Activated CD8-positive, alpha-beta memory T cell treated with anti-CD3 and anti-CD28 coated beads, Interleukin-2, amount 10 ng/mL, durations not matched to agents 7 days and 5 days (primary cell): ENCODE measurements at regions of chr3 and their contacts with region 1.

Region 1: GRCh38 chr3:111311709-111312235 is 230.2 kb upstream of the CD96 start:
- DNase-seq: no peak
- ATAC-seq: peak; percentile 83
- H3K4me3 Mint-ChIP-seq: peak overlapping the region; percentile 18
- H3K27ac Mint-ChIP-seq: peak overlapping the region; percentile 95
- H3K4me1 Mint-ChIP-seq: peaks cover 38% of the 10 kb centered on the region
- H3K27me3 Mint-ChIP-seq: no peaks in the 10 kb centered on the region

Region 2: DNA sequence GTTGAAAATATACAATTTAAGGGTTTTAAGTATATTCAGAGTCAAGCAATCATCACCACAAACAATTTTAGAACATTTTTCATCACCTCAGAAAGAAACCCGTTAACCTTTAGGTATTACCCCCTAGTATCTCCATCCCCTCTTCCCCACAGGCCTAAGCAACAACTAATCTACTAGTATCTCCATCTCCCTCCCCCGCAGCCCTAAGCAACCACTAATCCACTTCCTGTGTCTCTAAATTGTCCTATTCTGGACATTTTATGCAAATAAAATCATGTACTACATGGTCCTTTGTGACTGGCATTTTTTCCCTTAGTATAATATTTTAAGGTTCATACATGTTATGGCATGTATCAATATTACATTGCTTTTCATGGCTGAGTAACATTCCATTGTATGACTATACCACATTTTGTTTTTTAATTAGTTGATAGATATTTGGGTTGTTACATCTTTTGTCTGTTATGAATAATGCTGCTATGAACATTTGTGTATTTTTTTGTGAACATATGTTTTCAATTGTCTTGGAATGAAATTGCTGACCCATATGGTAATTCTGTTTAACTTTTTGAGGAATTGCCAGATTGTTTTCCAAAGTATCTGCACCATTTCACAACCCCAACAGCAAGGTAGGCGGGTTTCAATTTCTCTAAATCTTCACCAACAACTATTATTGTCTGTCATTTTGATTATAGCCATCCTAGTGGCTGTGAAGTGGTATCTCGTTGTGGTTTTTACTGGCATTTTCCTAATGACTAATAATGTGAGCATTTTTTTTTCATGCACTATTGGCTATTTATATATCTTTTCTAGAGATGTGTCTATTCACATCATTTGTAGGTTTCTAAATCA is 14.6 kb after region 1 on chr3:
- CTCF ChIA-PET with region 1: interaction called, 26 read pairs
- DNase-seq: peak; percentile 58
- ATAC-seq: peak; percentile 32
- H3K4me3 Mint-ChIP-seq: no peak overlapping the region
- H3K27ac Mint-ChIP-seq: no peak overlapping the region
- H3K4me1 Mint-ChIP-seq: peaks cover 31% of the 10 kb centered on the region
- H3K27me3 Mint-ChIP-seq: no peaks in the 10 kb centered on the region

Region 3: GRCh38 chr3:111531446-111531845 is 219.7 kb after region 1 on chr3:
- CTCF ChIA-PET with region 1: no interaction called
- DNase-seq: no peak
- ATAC-seq: no peak
- H3K4me3 Mint-ChIP-seq: no peak overlapping the region
- H3K27ac Mint-ChIP-seq: no peak overlapping the region
- H3K4me1 Mint-ChIP-seq: peaks cover 2% of the 10 kb centered on the region
- H3K27me3 Mint-ChIP-seq: no peaks in the 10 kb centered on the region